Panc1 (cell line): ENCODE measurements at regions of chr2 and their contacts with region 1.

Region 1: GRCh38 chr2:25936889-25937545 is 45.3 kb downstream of the KIF3C start:
- DNase-seq: no peak
- ATAC-seq: peak; percentile 54; the same call in 1 of the 2 replicates
- H3K4me3 ChIP-seq: no peak overlapping the region
- H3K27ac ChIP-seq: 0 out of 2 replicates have a peak overlapping the region, but pooled peaks have one; percentile 24
- H3K4me1 ChIP-seq: no peaks in the 10 kb centered on the region
- H3K27me3 ChIP-seq: no peaks in the 10 kb centered on the region
- CTCF ChIP-seq: no peak

Region 2: DNA sequence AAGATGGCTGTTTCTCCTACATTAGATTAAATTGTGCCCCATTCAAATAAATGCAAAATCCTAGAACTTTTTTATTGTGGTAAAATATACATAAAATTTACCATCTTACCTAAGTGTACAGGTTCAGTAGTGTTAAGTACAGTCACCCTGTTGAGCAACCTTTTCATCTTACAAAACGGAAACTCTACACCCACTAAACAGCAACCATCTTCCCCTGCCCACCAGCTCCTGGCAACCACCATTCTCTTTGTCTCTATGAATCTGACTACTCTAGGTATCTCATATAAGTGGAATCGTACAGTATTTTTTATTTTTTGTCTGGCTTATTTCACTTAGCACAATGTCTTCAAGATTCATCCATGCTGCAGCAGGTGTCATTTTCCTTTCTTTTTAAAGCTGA is 111.8 kb before region 1 on chr2:
- CTCF ChIA-PET with region 1: no interaction called
- POLR2A ChIA-PET with region 1: no interaction called
- in situ Hi-C with region 1: no loop called
- intact Hi-C with region 1: no loop called
- DNase-seq: no peak
- ATAC-seq: no peak
- H3K4me3 ChIP-seq: no peak overlapping the region
- H3K27ac ChIP-seq: no peak overlapping the region
- H3K4me1 ChIP-seq: peaks cover 9% of the 10 kb centered on the region
- H3K27me3 ChIP-seq: no peaks in the 10 kb centered on the region
- CTCF ChIP-seq: no peak

Region 3: DNA sequence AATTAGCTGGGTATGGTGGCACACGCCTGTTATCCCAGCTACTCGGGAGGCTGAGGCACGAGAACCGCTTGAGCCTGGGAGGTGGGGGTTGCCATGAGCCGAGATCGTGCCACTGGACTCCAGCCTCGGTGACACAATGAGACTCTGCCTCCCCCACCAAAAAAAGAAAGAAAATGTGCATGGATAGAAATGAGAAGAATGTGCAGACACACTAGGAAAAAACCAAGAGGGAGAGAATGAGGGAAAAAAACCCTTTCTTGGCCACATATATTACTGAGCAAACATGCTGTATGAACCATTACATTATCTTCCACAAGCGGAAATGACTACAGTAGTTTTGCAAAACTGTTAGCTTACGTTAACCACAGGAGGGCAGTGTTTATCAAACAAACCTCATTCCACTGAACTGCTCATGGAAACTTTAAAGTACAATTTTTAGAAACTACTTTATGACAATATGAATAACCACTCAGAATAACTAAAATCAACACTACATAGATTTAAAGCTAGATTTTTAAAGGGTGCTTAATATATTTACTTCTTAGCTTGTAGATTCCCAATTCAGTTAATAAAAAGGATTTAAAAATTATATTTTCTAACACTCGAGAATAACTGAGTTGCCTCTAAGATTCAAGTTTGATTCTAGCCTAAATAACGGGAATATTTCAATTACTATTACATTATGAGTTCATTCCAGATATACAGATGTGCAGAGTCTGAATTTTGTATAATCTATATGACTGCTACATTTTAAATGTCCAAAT is 85.1 kb before region 1 on chr2:
- CTCF ChIA-PET with region 1: no interaction called
- POLR2A ChIA-PET with region 1: no interaction called
- in situ Hi-C with region 1: no loop called
- intact Hi-C with region 1: loop called (anchors 5 kb)
- DNase-seq: peak; percentile 81
- ATAC-seq: peak; percentile 90
- H3K4me3 ChIP-seq: peak overlapping the region; percentile 19 to 21
- H3K27ac ChIP-seq: peak overlapping the region; percentile 78
- H3K4me1 ChIP-seq: peaks cover 30% of the 10 kb centered on the region
- H3K27me3 ChIP-seq: no peaks in the 10 kb centered on the region
- CTCF ChIP-seq: peak; percentile 72